Calu3 (cell line): ENCODE measurements at regions of chr1 and their contacts with region 1.

Region 1: DNA sequence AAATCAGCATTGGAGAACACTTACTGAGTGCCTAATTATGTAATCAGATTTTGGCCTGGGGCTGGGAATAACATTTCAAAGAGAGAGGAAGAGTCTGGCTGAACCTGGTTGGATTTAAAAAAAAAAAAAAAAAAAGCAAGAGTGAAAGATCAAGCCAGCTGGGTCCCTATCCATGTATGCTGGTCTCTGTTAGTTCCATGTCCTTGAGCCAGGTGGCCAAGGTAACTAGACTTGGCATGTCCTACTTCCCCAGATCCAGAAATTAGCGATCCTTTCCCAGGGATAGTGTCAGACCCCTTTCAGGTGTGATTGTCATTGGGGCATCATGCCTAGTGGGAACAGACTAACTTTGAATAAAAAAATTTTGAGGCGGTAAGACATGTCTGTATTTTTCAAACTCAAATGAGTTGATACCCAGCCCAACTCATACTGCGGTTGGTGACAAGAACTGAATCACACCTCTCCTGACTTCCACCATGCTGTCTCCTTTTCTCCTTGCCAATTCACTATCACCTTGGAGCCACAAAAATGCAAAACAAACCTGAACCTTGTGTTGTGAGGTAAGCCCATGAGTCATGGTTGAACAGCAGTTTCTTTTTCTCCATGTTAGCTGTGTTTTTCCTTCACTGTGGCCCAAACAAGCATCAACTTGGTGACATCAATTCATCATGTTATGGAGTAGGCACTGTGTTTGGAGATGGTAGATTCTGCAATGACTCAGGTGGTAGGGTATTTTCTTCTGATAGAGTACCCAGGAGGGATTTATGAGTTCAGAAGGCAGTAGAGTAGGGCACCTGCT is 24.5 kb upstream of the PPP2R5A start:
- DNase-seq: peak; percentile 69
- H3K4me3 Mint-ChIP-seq: peak overlapping the region; percentile 9
- H3K27ac Mint-ChIP-seq: peak overlapping the region; percentile 95
- H3K4me1 Mint-ChIP-seq: peaks cover 32% of the 10 kb centered on the region
- H3K27me3 Mint-ChIP-seq: no peaks in the 10 kb centered on the region
- CTCF ChIP-seq: no peak

Region 2: GRCh38 chr1:212062832-212063438 is 197.8 kb before region 1 on chr1:
- CTCF ChIA-PET with region 1: no interaction called
- intact Hi-C with region 1: no loop called
- DNase-seq: no peak
- H3K4me3 Mint-ChIP-seq: no peak overlapping the region
- H3K27ac Mint-ChIP-seq: no peak overlapping the region
- H3K4me1 Mint-ChIP-seq: peaks cover 19% of the 10 kb centered on the region
- H3K27me3 Mint-ChIP-seq: no peaks in the 10 kb centered on the region
- CTCF ChIP-seq: peak; percentile 73

Region 3: DNA sequence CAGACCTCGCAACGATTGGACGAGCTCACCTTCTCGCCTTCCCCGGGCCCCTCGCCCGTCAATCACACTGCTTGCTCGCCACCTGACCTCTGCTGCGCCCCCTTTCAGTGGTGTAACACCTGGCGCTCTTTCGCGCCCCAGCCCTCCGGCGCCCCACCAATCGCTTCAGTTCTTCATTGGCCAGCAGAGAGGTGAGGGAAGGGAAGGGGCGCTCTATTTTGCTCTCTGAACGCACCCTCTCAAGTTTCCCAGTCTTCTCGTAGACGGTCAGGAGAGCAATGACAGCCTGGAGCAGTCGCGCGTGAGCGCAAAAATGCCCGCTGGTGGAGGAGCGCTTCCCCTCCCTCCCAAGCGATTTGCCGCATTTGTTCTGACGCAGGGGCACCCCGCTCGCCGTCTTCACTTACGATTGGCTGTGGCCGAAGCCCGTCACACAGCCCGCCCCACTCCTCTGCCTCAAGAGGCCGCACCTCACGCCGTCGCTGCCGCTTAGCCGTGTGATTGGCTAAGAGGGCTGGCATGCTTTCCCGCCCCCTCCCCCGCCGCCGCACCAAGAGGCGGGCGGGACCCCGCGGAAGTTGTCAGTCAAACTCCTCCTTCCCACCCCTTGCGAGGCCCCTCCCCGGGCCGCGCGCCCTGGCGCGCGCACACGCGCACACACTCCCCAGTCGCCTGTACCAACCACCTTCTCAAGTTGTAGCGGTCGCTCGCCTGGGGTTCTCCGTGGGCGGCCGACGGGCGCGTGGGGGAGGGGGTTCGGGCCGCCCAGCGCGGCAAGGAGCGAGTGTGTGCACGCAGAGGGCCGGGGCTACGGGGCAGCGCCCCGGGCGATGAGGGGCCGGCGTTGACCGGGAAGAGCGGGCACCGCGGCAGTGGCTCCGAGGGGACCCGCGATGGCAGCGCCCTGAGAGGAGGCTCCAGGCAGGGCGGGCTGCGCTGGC is 24.3 kb after region 1 on chr1 and contains the start of gene PPP2R5A:
- CTCF ChIA-PET with region 1: interaction called, 10 read pairs
- intact Hi-C with region 1: no loop called
- DNase-seq: peak; percentile 99
- H3K4me3 Mint-ChIP-seq: peak within 1 kb of the TSS; percentile 79
- H3K27ac Mint-ChIP-seq: peak within 1 kb of the TSS; percentile 94
- H3K4me1 Mint-ChIP-seq: peaks cover 20% of the 10 kb centered on the region
- H3K27me3 Mint-ChIP-seq: no peaks in the 10 kb centered on the region
- CTCF ChIP-seq: no peak
- total RNA-seq, gene PPP2R5A: 42.9 and 45.2 TPM in 2 replicates